Endothelial cell of umbilical vein (primary cell): ENCODE measurements at regions of chr4 and their contacts with region 1.

Region 1: DNA sequence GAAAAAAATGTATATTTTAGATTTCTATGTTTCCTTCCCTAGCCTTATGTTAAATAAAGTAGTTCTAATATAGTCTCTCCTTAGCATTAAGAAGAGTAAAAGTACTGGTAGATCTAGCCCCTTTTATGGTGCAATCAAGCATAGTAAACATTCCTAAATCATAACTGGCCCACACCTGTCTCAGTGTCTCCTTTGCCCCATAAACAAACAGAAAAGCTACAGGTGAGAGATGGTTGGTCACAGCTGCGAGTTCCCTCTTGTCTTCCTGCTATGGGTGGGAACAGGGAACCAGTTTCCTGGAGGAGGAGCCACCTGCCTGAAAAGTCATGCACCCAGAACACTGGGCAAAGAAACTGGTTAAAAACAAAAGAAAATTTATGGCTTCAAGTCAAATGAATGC is 16.6 kb downstream of the SOWAHB start:
- DNase-seq: no peak
- H3K4me3 ChIP-seq: no peak overlapping the region
- H3K27ac ChIP-seq: no peak overlapping the region
- H3K4me1 ChIP-seq: peaks cover 7% of the 10 kb centered on the region
- H3K27me3 ChIP-seq: no peaks in the 10 kb centered on the region
- CTCF ChIP-seq: no peak
- POLR2A ChIP-seq: no peak

Region 2: DNA sequence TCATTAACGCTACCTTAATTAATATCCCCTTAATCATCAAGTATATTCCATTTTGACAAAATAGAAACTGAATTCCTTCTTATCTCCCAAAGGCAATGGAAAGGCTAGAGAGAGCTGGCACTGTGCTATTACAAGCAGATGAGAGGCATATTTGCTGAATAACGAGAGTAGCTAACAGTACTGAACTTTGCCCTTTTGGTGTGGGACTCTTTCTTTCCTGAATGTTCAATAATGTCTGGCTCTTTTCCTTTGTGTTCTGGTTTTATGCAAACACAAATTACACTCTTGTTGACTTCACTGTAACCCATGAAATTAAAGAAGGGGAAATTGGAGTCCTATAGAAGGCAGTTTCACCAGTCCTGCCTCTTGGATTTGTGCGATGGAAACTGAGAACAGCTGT is 382.8 kb before region 1 on chr4:
- CTCF ChIA-PET with region 1: no interaction called
- POLR2A ChIA-PET with region 1: no interaction called
- dilution Hi-C with region 1: no loop called
- intact Hi-C with region 1: no loop called
- DNase-seq: no peak
- H3K4me3 ChIP-seq: no peak overlapping the region
- H3K27ac ChIP-seq: no peak overlapping the region
- H3K4me1 ChIP-seq: no peaks in the 10 kb centered on the region
- H3K27me3 ChIP-seq: peaks cover 38 to 40% of the 10 kb centered on the region in 2 experiments
- CTCF ChIP-seq: no peak
- POLR2A ChIP-seq: no peak

Region 3: GRCh38 chr4:76758290-76758882 is 123.0 kb before region 1 on chr4:
- CTCF ChIA-PET with region 1: no interaction called
- POLR2A ChIA-PET with region 1: no interaction called
- dilution Hi-C with region 1: no loop called
- intact Hi-C with region 1: no loop called
- DNase-seq: peak; percentile 78
- H3K4me3 ChIP-seq: no peak overlapping the region
- H3K27ac ChIP-seq: no peak overlapping the region
- H3K4me1 ChIP-seq: peaks cover 17% of the 10 kb centered on the region
- H3K27me3 ChIP-seq: no peaks in the 10 kb centered on the region
- CTCF ChIP-seq: peak; percentile 66 to 84
- POLR2A ChIP-seq: no peak

Region 4: DNA sequence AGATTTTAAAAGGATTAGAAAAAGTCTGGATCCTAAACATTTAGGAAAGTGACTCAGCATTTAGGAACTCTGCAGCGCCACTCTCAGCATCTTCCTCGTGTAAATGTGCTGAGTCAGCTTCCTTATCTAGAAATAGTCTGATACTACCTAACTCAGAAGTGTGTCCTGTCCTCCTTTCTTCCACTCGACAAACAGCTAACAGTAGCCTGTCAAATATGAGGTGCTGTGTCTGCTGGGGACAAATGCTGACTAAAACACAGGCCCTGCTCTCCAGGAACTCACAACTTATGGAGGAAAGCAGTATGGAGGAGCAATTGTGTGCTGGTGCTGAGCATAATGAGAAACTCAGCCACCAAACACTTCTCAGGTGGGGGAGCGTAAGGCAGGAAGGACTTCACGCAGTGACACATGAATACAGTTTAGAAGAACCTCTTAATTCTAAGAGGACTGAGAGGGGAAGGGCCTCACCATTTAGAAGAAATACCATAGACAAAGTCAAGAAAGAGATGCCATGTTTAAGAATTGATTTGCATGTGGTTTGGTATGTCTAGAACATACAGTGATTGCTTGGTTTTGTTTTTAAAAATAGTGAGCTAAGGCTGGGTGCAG is 108.8 kb before region 1 on chr4:
- CTCF ChIA-PET with region 1: no interaction called
- POLR2A ChIA-PET with region 1: no interaction called
- dilution Hi-C with region 1: no loop called
- intact Hi-C with region 1: loop called (anchors 5 kb)
- DNase-seq: peak; percentile 41
- H3K4me3 ChIP-seq: no peak overlapping the region
- H3K27ac ChIP-seq: peak overlapping the region; percentile 57
- H3K4me1 ChIP-seq: peaks cover 10% of the 10 kb centered on the region
- H3K27me3 ChIP-seq: no peaks in the 10 kb centered on the region
- CTCF ChIP-seq: no peak
- POLR2A ChIP-seq: no peak

Region 5: GRCh38 chr4:76931087-76931486 is 49.7 kb after region 1 on chr4:
- CTCF ChIA-PET with region 1: no interaction called
- POLR2A ChIA-PET with region 1: no interaction called
- dilution Hi-C with region 1: no loop called
- intact Hi-C with region 1: no loop called
- DNase-seq: no peak
- H3K4me3 ChIP-seq: no peak overlapping the region
- H3K27ac ChIP-seq: no peak overlapping the region
- H3K4me1 ChIP-seq: no peaks in the 10 kb centered on the region
- H3K27me3 ChIP-seq: no peaks in the 10 kb centered on the region
- CTCF ChIP-seq: no peak
- POLR2A ChIP-seq: no peak